Activated B cell treated with CpG ODN at 0.5 μM for 24 hours (primary cell): ENCODE measurements at regions of chr9 and their contacts with region 1.

Region 1: DNA sequence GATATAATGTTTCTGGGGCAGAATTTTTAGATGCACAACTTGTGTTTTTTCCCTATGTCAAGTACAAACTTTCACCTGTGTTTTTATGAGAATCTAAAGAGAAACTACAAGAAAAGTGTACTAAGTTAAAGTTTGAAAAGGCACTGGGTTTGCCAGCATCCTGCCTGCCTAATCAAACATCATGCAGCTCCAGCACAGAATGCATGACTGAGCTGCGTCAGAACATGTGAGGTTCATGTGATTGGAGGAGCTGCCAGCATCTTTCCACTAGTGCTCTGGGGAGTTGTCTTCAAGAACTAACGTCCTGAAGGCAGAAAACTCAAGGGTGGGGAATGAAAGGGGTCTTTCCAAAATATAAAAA is 46.1 kb upstream of the RIC1 start:
- DNase-seq: peak; percentile 45
- ATAC-seq: peak; percentile 62
- H3K4me3 Mint-ChIP-seq: peak overlapping the region; percentile 71
- H3K27ac Mint-ChIP-seq: peak overlapping the region; percentile 99
- H3K4me1 Mint-ChIP-seq: peaks cover 89% of the 10 kb centered on the region
- H3K27me3 Mint-ChIP-seq: no peaks in the 10 kb centered on the region
- CTCF ChIP-seq: no peak

Region 2: GRCh38 chr9:5186416-5187169 is 396.2 kb before region 1 on chr9:
- CTCF ChIA-PET with region 1: interaction called, 53 read pairs
- POLR2A ChIA-PET with region 1: interaction called, 9 read pairs
- intact Hi-C with region 1: no loop called
- DNase-seq: no peak
- ATAC-seq: peak; percentile 81
- H3K4me3 Mint-ChIP-seq: no peak overlapping the region
- H3K27ac Mint-ChIP-seq: no peak overlapping the region
- H3K4me1 Mint-ChIP-seq: peaks cover 12% of the 10 kb centered on the region
- H3K27me3 Mint-ChIP-seq: no peaks in the 10 kb centered on the region
- CTCF ChIP-seq: no peak

Region 3: DNA sequence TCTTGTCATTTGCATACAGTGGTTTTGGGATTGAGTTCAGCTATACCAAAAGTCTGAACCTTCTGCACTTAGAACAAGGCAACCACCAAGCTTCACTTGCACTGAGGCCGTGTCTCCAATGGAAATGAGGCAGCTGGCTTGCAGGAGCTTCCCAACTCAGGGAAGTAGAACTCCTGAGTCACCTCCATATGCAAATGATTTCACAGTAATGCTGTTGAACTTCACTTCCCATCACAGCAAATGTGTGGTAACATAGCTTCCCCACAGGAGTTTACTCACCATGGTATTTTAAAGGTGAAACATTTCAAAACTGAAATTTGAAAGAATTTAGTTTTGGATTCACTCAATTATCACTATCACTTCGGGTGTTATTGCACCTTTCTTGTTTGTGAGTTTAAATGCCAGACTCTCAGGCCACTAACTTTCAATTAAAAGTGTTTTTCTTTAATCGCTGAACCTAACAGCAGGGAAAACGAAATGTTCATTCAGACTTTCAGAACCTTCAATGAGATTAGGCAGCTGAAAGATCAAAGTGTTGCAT is 123.5 kb before region 1 on chr9:
- CTCF ChIA-PET with region 1: no interaction called
- POLR2A ChIA-PET with region 1: interaction called, 22 read pairs
- intact Hi-C with region 1: no loop called
- DNase-seq: no peak
- ATAC-seq: peak; percentile 32
- H3K4me3 Mint-ChIP-seq: peak overlapping the region; percentile 20
- H3K27ac Mint-ChIP-seq: peak overlapping the region; percentile 67
- H3K4me1 Mint-ChIP-seq: peaks cover 46% of the 10 kb centered on the region
- H3K27me3 Mint-ChIP-seq: no peaks in the 10 kb centered on the region
- CTCF ChIP-seq: no peak

Region 4: DNA sequence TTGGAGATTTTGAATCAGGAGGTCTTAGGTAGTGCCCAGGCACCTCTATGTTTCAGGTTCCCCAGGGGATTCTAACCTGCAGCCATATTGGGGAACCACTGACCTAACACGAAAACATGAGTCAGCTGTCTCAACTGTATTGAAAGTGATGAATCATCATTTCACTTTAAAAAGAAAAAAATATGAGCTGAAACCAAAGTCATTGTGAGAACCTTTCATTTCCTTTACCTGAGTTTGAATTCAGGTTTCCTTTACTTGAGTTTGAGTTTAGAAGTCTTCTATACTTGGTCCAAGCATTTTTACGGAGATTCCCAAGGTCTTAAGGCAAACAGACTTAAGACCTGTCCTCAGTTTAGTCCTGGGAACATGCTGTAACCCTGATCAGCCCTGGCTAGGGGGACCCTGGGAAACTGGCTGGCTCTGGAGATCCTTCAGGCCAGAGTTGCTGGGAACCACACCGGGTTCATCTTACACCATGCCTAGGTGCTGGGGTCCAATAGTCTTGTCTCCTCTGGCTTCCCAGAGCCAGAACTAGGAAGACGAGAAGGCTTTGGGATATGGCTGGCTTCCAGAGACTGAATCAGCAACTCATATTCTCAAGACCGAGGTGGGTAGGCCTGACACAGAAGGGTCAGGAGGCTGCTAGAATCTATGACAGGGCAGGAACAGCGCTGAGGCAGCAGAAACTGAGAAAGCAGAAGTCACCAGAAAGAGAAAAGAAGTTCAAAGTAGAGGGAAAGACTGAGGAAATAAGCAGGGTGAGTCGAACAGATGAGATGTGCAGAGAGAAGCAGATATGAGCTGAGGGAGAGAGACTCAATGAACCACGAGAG is 88.9 kb before region 1 on chr9:
- CTCF ChIA-PET with region 1: no interaction called
- POLR2A ChIA-PET with region 1: interaction called, 19 read pairs
- intact Hi-C with region 1: no loop called
- DNase-seq: no peak
- ATAC-seq: peak; percentile 78
- H3K4me3 Mint-ChIP-seq: peak overlapping the region; percentile 3
- H3K27ac Mint-ChIP-seq: peak overlapping the region; percentile 54
- H3K4me1 Mint-ChIP-seq: peaks cover 17% of the 10 kb centered on the region
- H3K27me3 Mint-ChIP-seq: no peaks in the 10 kb centered on the region
- CTCF ChIP-seq: no peak

Region 5: DNA sequence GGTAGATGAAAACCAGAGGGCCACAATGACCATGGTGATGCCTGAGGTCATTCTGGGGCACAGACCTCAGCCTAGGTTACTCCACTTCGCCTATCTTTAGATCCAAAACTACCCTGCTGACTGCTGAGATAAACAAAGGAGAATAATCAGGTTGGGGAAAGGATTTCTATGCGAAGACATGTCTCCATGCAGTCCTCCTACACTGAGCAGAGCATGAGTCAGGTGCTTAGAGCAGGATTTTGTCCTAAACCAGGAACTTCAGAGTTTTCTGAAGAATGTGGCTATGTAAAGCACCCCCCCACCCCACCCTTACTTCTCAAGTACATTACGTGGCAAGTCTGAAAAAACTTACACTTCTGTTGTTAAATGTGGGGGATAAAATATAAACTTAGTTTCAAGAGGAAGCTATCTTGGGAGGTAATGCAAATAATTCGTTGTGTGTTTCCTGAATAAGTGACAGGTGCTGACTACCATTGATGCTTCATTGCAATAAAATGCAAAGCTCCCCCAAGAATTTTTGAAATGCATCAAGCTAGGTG is 53.1 kb before region 1 on chr9:
- CTCF ChIA-PET with region 1: interaction called, 7 read pairs
- POLR2A ChIA-PET with region 1: interaction called, 31 read pairs
- intact Hi-C with region 1: loop called (anchors 1 kb)
- DNase-seq: no peak
- ATAC-seq: peak; percentile 57
- H3K4me3 Mint-ChIP-seq: peak overlapping the region; percentile 60
- H3K27ac Mint-ChIP-seq: peak overlapping the region; percentile 51
- H3K4me1 Mint-ChIP-seq: peaks cover 57% of the 10 kb centered on the region
- H3K27me3 Mint-ChIP-seq: no peaks in the 10 kb centered on the region
- CTCF ChIP-seq: no peak

Region 6: GRCh38 chr9:5566054-5566618 is 16.7 kb before region 1 on chr9:
- CTCF ChIA-PET with region 1: interaction called, 3 read pairs
- POLR2A ChIA-PET with region 1: interaction called, 53 read pairs
- intact Hi-C with region 1: loop called (anchors 1 kb)
- DNase-seq: no peak
- ATAC-seq: peak; percentile 84
- H3K4me3 Mint-ChIP-seq: no peak overlapping the region
- H3K27ac Mint-ChIP-seq: peak overlapping the region; percentile 2
- H3K4me1 Mint-ChIP-seq: peaks cover 35% of the 10 kb centered on the region
- H3K27me3 Mint-ChIP-seq: no peaks in the 10 kb centered on the region
- CTCF ChIP-seq: no peak